HEK293 (cell line): ENCODE measurements at regions of chr17 and their contacts with region 1.

Region 1: GRCh38 chr17:82716203-82717010 is at the start of gene FN3KRP:
- H3K4me3 ChIP-seq: peak within 1 kb of the TSS; percentile 88
- H3K27ac ChIP-seq: peak within 1 kb of the TSS; percentile 80
- H3K4me1 ChIP-seq: peaks cover 7% of the 10 kb centered on the region; the same call in 1 of the 2 replicates
- CTCF ChIP-seq: no peak

Region 2: GRCh38 chr17:82592767-82593589 is 123.4 kb before region 1 on chr17:
- CTCF ChIA-PET with region 1: no interaction called
- POLR2A ChIA-PET with region 1: no interaction called
- H3K4me3 ChIP-seq: peak overlapping the region; percentile 44
- H3K27ac ChIP-seq: peak overlapping the region; percentile 73
- H3K4me1 ChIP-seq: peaks cover 4% of the 10 kb centered on the region
- CTCF ChIP-seq: no peak

Region 3: DNA sequence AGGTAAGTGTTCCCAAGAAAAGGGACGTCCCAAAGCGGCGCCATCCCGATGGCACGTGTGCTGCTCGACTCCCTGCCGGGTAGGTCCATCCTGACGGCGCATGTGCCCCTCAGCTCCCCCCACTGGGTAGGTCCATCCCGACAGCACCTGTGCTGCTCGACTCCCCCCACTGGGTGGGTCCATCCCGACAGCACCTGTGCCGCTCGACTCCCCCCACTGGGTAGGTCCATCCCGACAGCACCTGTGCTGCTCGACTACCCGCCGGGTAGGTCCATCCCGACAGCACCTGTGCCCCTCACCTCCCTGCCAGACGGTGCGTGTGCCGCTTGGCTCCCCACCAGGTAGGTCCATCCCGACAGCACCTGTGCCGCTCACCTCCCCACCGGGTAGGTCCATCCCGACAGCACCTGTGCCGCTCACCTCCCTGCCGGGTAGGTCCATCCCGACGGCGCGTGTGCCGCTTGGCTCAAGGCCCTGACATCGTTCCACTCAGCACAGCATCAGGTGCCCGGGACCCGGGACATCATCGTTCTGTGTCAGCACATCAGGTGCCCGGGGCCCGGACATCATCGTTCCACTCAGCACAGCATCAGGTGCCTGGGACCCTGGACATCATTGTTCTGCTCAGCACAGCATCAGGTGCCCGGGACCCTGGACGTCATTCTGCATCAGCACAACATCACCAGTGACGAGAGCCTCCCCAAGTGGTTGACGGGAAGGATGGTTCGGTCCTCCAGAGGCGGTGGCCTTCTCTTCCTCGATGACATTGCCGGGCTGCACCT is 13.3 kb after region 1 on chr17:
- CTCF ChIA-PET with region 1: no interaction called
- POLR2A ChIA-PET with region 1: interaction called, 16 read pairs
- H3K4me3 ChIP-seq: no peak overlapping the region
- H3K27ac ChIP-seq: no peak overlapping the region
- H3K4me1 ChIP-seq: no peaks in the 10 kb centered on the region
- CTCF ChIP-seq: no peak